Activated CD4-positive, alpha-beta T cell treated with anti-CD3 and anti-CD28 coated beads, Interleukin-2, amount 10 ng/mL, durations not matched to agents 24 days and 14 days (primary cell): ENCODE measurements at regions of chr5 and their contacts with region 1.

Region 1: GRCh38 chr5:87282269-87282668 is 14.6 kb downstream of the RASA1 start:
- DNase-seq: no peak
- H3K4me3 Mint-ChIP-seq: peak overlapping the region; percentile 78
- H3K27ac Mint-ChIP-seq: peak overlapping the region; percentile 72
- H3K4me1 Mint-ChIP-seq: peaks cover 25% of the 10 kb centered on the region
- H3K27me3 Mint-ChIP-seq: no peaks in the 10 kb centered on the region

Region 2: GRCh38 chr5:87243166-87243844 is 39.0 kb before region 1 on chr5:
- intact Hi-C with region 1: no loop called
- DNase-seq: no peak
- H3K4me3 Mint-ChIP-seq: no peak overlapping the region
- H3K27ac Mint-ChIP-seq: no peak overlapping the region
- H3K4me1 Mint-ChIP-seq: peaks cover 2% of the 10 kb centered on the region
- H3K27me3 Mint-ChIP-seq: peaks cover 4% of the 10 kb centered on the region

Region 3: DNA sequence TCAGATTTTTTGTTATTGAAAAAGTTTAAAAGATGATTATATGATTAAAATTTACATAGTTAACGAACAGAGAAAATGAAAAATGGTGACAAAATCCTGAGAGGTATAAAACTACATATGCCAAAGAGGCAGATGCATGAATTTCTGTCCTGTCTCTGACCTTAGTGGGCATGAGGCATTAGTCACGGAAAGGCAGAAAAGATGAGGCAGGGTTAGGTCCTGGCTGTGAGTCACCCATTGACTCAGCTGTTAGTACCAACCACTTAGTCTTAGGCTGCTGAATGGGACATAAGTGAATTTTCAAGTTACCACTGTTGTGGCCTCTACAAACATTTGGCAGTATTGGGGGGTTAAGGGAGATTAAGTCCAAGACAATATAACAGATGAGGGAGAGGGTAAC is 18.5 kb after region 1 on chr5:
- intact Hi-C with region 1: loop called (anchors 2 kb)
- DNase-seq: no peak
- H3K4me3 Mint-ChIP-seq: no peak overlapping the region
- H3K27ac Mint-ChIP-seq: no peak overlapping the region
- H3K4me1 Mint-ChIP-seq: peaks cover 50% of the 10 kb centered on the region
- H3K27me3 Mint-ChIP-seq: no peaks in the 10 kb centered on the region

Region 4: DNA sequence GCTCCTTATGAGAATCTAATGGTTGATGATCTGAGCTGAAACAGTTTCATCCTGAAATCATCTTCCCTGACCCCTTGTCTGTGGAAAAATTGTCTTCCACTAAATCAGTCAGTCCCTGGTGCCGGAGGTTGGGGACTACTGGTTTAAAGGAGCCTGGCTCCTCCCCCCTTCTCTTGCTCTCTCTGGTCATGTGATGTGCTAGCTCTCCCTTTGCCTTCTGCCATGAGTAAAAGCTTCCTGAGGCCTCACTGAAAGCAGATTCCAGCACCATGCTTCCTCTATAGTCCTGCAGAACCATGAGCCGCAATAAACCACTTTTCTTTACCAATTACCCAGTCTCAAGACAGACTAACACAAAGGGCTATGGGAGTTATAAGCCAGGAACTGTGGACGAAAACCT is 40.1 kb after region 1 on chr5:
- intact Hi-C with region 1: no loop called
- DNase-seq: no peak
- H3K4me3 Mint-ChIP-seq: no peak overlapping the region
- H3K27ac Mint-ChIP-seq: no peak overlapping the region
- H3K4me1 Mint-ChIP-seq: peaks cover 9% of the 10 kb centered on the region
- H3K27me3 Mint-ChIP-seq: no peaks in the 10 kb centered on the region